CD14-positive monocyte (primary cell): ENCODE measurements at regions of chr7 and their contacts with region 1.

Region 1: DNA sequence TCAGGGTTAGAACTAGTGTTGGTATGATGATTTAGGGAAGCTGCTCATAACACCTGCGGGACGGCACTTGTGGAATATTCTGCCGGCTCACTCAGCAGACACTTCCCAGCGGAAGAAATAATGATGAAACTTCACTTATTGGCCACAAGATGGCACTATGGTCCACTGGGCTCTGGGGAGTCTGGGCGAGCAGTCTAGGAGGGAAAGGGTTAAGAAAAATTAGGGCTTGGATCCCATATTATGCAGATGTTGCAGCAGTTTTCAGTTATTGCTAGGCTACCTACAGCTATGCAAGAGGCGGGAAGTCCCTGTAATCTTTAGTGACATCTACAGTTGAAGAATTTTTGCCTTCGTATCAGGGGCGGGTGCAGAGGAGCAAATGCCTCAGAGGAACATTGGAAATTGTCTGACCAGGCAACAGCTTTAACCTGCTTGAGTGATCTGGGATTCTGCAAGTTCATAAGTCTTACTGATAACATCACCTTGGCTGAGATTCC is 238.7 kb upstream of the PRSS58 start:
- DNase-seq: peak in 2 of 3 donors; percentile 39 to 48
- H3K4me3 ChIP-seq: peak overlapping the region in 1 of 3 experiments; percentile 12
- H3K4me3 Mint-ChIP-seq: peak overlapping the region in 1 of 2 donors; percentile 79
- H3K27ac ChIP-seq: no peak overlapping the region
- H3K27ac Mint-ChIP-seq: no peak overlapping the region
- H3K4me1 ChIP-seq: peaks cover 6 to 13% of the 10 kb centered on the region in 2 donors
- H3K4me1 Mint-ChIP-seq: peaks cover 24% of the 10 kb centered on the region
- H3K27me3 ChIP-seq: no peaks in the 10 kb centered on the region
- H3K27me3 Mint-ChIP-seq: no peaks in the 10 kb centered on the region
- CTCF ChIP-seq: peak; percentile 83

Region 2: GRCh38 chr7:142463401-142463850 is 33.2 kb before region 1 on chr7:
- intact Hi-C with region 1: loop called in 1 of 2 experiments (anchors 5 kb)
- DNase-seq: peak in 2 of 3 donors; percentile 32 to 34
- H3K4me3 ChIP-seq: no peak overlapping the region
- H3K4me3 Mint-ChIP-seq: no peak overlapping the region
- H3K27ac ChIP-seq: peak overlapping the region in 1 of 2 donors; percentile 6
- H3K27ac Mint-ChIP-seq: no peak overlapping the region
- H3K4me1 ChIP-seq: peaks cover 21 to 22% of the 10 kb centered on the region in 2 donors
- H3K4me1 Mint-ChIP-seq: peaks cover 33% of the 10 kb centered on the region
- H3K27me3 ChIP-seq: no peaks in the 10 kb centered on the region
- H3K27me3 Mint-ChIP-seq: no peaks in the 10 kb centered on the region
- CTCF ChIP-seq: no peak

Region 3: DNA sequence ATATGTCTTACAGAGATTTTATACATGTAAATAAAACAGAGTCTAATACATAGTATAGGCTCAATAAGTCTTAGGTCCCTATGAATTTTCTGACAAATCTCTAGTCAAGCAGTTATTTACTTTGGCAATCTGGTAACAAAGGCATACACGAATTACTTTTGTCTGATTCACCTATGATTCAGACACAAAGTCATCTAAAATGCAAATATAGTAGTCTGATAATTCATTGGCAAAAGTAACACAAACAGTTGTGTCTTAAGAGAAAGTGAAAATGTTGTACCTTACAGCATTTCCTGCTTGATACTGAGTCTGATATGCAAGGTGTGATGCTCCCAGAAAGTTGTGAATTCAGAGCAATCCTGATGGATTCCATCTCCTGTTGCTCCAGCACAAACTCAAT is 43.3 kb after region 1 on chr7:
- intact Hi-C with region 1: no loop called
- DNase-seq: no peak
- H3K4me3 ChIP-seq: no peak overlapping the region
- H3K4me3 Mint-ChIP-seq: no peak overlapping the region
- H3K27ac ChIP-seq: no peak overlapping the region
- H3K27ac Mint-ChIP-seq: no peak overlapping the region
- H3K4me1 ChIP-seq: peaks cover 9 to 13% of the 10 kb centered on the region in 2 donors
- H3K4me1 Mint-ChIP-seq: peaks cover 16% of the 10 kb centered on the region
- H3K27me3 ChIP-seq: no peaks in the 10 kb centered on the region
- H3K27me3 Mint-ChIP-seq: peaks cover 0 to under 1% (median 0%) of the 10 kb centered on the region in 3 donors
- CTCF ChIP-seq: no peak

Region 4: DNA sequence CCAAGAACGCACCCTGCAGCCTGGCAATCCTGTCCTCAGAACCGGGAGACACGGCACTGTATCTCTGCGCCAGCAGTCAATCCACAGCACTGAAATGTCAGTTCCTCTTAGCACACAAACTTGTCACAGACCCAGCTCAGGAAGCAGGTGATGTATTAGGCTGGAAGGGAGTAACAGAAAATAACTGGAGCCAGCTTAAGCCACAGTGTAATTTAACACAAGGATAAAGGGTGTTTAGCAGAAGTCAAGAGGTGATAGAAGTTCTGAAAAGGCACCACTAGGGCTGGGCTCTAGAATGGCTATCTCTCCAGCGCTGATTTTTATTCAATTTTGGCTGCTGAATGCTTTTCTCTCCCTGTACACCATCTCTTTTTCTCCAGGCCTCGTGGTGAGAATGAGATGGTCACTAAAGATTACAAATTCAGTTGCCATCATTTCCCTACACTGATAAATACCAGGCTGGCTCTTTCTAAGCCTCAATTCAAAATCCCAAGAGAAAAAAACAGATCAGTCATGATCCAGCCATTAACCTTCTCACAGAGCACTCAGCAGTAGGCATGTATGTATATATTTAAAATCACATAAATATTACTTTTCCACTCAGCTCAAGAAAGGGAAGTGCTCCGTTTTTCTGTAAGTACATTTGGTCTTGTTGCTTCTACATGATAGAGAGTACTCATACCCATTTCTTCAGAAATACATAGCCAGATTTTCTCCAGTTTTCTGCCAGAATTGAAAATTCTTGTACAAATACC is 150.0 kb after region 1 on chr7:
- intact Hi-C with region 1: no loop called
- DNase-seq: peak; percentile 1 to 15 (median 2)
- H3K4me3 ChIP-seq: peak overlapping the region in 1 of 3 experiments; percentile 13
- H3K4me3 Mint-ChIP-seq: peak overlapping the region; percentile 28 to 78
- H3K27ac ChIP-seq: no peak overlapping the region
- H3K27ac Mint-ChIP-seq: no peak overlapping the region
- H3K4me1 ChIP-seq: peaks cover 7 to 8% of the 10 kb centered on the region in 2 donors
- H3K4me1 Mint-ChIP-seq: peaks cover 11% of the 10 kb centered on the region
- H3K27me3 ChIP-seq: peaks cover 5 to 6% of the 10 kb centered on the region in 2 donors
- H3K27me3 Mint-ChIP-seq: peaks cover 7 to 17% (median 9%) of the 10 kb centered on the region in 3 donors
- CTCF ChIP-seq: no peak